AG04449 (cell line): ENCODE measurements at regions of chr14 and their contacts with region 1.

Region 1: GRCh38 chr14:36070031-36070719 is 106.3 kb downstream of the PTCSC3 start:
- DNase-seq: peak; percentile 36
- H3K4me3 ChIP-seq: no peak overlapping the region
- CTCF ChIP-seq: peak; percentile 86

Region 2: GRCh38 chr14:36052681-36053080 is 17.5 kb before region 1 on chr14:
- CTCF ChIA-PET with region 1: interaction called, 13 read pairs
- POLR2A ChIA-PET with region 1: no interaction called
- DNase-seq: no peak
- H3K4me3 ChIP-seq: no peak overlapping the region
- CTCF ChIP-seq: no peak

Region 3: DNA sequence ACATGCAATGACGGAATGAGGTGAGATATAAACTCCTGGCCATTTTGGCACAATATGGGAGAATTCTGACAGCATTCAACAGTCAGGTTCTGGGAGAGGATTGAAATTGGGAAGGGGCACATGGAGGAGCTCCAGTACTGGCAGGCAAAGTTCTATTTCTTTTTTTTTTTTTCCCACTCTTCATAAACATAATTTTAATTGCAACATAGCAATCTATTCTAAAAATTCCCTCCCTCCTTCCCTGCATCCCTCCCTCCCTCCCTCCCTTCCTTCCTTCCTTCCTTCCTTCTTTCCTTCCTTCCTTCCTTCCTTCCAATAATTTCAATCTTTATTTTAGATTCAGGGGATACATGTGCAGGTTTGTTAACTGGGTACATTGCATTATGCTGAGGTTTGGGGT is 13.1 kb after region 1 on chr14:
- CTCF ChIA-PET with region 1: interaction called, 65 read pairs
- POLR2A ChIA-PET with region 1: interaction called, 3 read pairs
- DNase-seq: no peak
- H3K4me3 ChIP-seq: no peak overlapping the region
- CTCF ChIP-seq: no peak

Region 4: DNA sequence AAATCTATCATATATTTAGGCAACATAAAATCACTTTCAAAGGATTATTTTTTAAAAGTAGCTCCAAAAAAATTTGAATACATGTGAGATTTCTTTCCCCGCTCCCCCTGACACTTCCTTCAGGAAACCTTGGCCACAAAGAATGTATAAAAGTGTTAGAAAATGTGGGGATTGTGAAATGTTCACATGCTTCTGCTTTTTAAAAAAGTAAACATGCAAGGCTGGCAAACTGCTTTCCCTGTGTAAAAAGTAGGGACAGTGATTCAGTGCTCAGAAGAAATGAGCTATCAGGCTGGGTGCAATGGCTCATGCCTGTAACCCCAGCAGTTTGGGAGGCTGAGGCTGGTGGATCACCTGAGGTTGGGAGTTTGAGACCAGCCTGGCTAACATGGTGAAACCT is 223.6 kb after region 1 on chr14:
- CTCF ChIA-PET with region 1: interaction called, 25 read pairs
- POLR2A ChIA-PET with region 1: no interaction called
- DNase-seq: peak; percentile 49
- H3K4me3 ChIP-seq: no peak overlapping the region
- CTCF ChIP-seq: no peak

Region 5: DNA sequence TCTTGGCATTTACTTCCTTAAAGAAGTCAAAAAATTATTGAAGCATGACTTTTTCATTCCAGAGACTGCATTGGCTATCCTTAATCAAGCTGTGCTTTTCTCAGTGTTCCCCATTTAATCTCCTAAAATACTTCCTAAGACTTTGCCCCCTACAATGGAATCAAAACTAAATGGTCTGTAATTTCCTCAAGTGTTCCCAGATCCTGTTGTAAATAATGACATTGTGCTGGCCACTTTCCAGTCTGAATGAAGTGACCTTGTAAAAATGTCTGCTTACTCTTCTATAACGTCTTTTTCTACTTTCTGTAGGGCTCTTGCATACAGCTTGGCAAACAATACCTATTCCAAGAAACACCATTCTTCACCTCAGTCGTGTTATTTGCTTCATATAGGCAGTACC is 295.6 kb after region 1 on chr14:
- CTCF ChIA-PET with region 1: interaction called, 27 read pairs
- POLR2A ChIA-PET with region 1: no interaction called
- DNase-seq: no peak
- H3K4me3 ChIP-seq: no peak overlapping the region
- CTCF ChIP-seq: no peak

Region 6: DNA sequence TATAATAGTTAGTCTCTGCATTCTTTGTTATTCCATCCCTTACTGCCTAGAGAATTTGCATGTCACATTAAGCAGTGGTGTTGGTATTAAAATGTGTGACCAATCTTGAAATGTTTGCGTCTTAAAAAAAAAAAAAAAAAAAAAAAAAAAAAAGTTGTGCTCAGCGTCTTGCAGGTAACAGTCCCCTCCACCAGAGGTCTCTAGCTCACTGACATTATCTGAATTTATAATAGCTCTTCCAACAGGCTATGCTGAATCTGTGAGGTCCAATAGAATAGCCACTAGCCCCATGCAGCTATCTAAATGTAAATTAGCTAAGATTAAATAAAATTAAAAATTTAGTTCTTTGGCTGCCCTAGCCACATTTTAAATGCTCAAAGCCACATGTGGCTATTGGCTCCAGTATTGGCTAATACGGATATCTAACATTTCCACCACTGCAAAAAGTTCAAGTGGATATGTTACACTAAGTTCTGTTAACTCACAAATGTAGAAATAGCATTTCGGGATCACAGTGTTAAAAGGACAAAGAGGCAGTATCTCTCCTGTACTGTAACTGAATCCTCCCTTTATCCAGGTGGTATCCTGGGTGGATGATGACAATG is 483.6 kb after region 1 on chr14:
- CTCF ChIA-PET with region 1: interaction called, 17 read pairs
- POLR2A ChIA-PET with region 1: no interaction called
- DNase-seq: peak; percentile 2
- H3K4me3 ChIP-seq: no peak overlapping the region
- CTCF ChIP-seq: peak; percentile 61

Region 7: DNA sequence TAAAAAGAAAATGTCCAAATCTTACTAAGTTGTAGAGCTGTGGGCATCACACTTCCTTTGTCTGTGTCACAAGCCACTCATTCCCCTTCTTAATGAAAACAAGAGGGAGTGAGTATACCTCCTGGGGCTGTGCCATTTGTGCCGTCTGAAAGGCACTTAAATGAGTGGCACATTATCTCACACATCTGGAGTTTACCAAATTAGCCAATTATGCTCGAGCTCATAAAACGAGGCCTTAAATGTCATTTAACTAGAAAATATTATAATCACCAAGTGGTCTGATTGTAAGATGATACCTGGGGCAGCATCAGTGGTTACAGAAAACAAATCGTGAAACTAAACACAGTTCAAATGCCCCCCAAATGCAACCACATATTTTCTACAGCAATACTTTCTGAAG is 737.6 kb after region 1 on chr14:
- CTCF ChIA-PET with region 1: no interaction called
- POLR2A ChIA-PET with region 1: no interaction called
- DNase-seq: no peak
- H3K4me3 ChIP-seq: no peak overlapping the region
- CTCF ChIP-seq: no peak

Region 8: GRCh38 chr14:37150414-37150813 is 1080.2 kb after region 1 on chr14:
- CTCF ChIA-PET with region 1: interaction called, 10 read pairs
- POLR2A ChIA-PET with region 1: no interaction called
- DNase-seq: no peak
- H3K4me3 ChIP-seq: no peak overlapping the region
- CTCF ChIP-seq: peak; percentile 48